ENCODE measurements at regions of chr16 and their contacts with region 1.

Region 1: GRCh38 chr16:58533751-58534470 is 18.6 kb downstream of the SETD6 start:
- DNase-seq: no peak

Region 2: DNA sequence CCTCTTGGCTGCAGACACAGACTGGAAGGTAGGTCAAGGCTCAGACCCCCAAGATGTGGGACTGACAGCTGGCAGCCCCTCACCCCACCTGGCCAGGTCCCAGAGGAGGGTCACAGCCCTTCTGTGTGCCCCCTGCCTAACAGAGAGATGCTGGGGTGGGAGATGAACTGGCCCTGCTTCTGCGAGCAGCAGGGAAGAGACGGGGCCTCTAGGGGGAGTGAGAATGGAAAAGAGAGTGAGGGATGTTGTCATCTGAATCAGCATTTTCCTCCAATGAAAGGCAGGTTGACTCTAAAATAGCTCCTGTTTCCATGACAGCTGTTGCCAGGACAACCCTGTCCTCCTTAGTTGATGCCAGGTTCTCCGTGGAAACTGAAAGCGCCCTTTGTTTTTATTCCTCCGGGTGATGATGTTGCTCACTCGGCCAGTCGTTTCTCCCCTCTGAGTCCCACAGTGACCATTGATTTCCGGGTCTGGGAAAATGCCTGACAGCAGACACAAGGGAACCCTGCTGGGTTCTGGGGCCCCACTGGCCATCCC is 38.9 kb before region 1 on chr16:
- intact Hi-C with region 1: no loop called
- DNase-seq: peak; percentile 86

Region 3: GRCh38 chr16:58511933-58512815 is 21.7 kb before region 1 on chr16:
- intact Hi-C with region 1: no loop called
- DNase-seq: peak; percentile 90

Region 4: GRCh38 chr16:58574895-58575294 is 41.0 kb after region 1 on chr16:
- intact Hi-C with region 1: loop called (anchors 5 to 10 kb)
- DNase-seq: no peak

Region 5: DNA sequence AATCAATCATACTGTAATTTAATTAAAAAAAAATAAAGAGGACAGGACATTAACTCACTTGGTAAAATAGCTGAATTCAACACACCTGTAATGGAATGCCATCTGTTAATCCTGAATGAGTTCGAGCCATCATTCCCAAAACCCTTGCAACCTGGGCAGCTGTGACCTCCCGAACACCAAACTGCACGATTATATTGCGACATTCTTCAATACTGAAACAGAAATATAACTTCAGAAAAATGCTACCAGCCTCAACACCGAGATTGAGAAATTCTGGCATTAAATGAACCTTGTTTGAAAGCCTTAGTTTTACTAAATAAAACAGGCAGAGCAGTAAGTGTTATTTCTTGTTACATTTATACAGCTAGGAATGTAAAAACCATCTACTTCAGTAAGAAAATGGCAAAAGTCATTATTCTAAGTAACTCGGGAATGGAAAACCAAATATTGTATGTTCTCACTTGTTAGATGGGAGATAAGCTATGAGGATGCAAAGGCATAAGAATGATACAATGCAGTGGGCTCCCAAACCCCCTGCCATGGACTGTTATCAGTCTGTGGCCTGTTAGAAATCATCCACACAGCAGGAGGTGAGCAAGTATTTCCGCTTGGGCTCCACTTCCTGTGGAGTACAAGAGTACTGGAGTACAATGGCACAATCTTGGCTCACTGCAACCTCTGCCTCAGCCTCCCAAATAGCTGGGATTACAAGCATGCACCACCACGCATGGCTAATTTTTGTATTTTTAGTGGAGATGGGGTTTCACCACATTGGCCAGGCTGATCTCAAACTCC is 49.3 kb after region 1 on chr16:
- intact Hi-C with region 1: loop called in 1 of 2 experiments (anchors 10 kb)
- DNase-seq: no peak

Measured in posterior vena cava (tissue), 2 donors.